GM12878 (cell line): ENCODE measurements at regions of chr3 and their contacts with region 1.

Region 1: DNA sequence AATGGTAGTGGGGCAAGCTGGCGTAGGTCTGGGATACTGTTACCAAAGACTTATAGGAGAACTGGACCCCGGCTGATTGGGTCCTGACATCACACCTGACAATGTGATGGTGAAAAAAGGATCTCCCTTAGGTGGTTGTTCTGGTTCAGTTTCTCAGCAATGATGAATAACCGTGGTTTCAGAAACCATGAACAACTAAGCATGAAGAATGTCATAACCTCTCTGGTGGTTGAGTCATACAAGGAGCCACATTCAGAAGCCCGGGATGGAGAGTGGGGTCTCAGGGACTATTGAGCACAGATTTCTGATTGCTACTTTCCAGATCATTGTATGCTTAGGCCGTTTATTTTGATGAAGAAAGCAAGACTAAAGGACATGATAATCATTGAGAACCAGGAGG is 17.4 kb downstream of the GPR160 start:
- DNase-seq: peak; percentile 63
- ATAC-seq: peak; percentile 73
- H3K4me3 ChIP-seq: peak overlapping the region; percentile 59
- H3K27ac ChIP-seq: peak overlapping the region; percentile 94
- H3K4me1 ChIP-seq: peaks cover 42% of the 10 kb centered on the region
- H3K27me3 ChIP-seq: no peaks in the 10 kb centered on the region
- CTCF ChIP-seq: 0 out of 6 replicates have a peak, but pooled peaks of 1 of the 3 experiments have one; percentile 2
- EP300 ChIP-seq: peak; percentile 35 to 36; a peak in 1 of 4 replicates
- POLR2A ChIP-seq: peak; percentile 24; the same call in 1 of the 2 replicates
- RAD21 ChIP-seq: no peak

Region 2: GRCh38 chr3:169846458-169847193 is 208.6 kb before region 1 on chr3:
- CTCF ChIA-PET with region 1: no interaction called
- POLR2A ChIA-PET with region 1: no interaction called
- RAD21 ChIA-PET with region 1: no interaction called
- SMC1A ChIA-PET with region 1: no interaction called
- in situ Hi-C with region 1: no loop called
- intact Hi-C with region 1: loop called (anchors 5 kb)
- DNase-seq: peak; percentile 46
- ATAC-seq: peak; percentile 95
- H3K4me3 ChIP-seq: peak overlapping the region; percentile 21; the same call in 1 of the 2 replicates
- H3K27ac ChIP-seq: peak overlapping the region; percentile 53
- H3K4me1 ChIP-seq: peaks cover 19% of the 10 kb centered on the region
- H3K27me3 ChIP-seq: peaks cover 0 to 4% of the 10 kb centered on the region in 2 experiments; a peak in 2 of 4 replicates
- CTCF ChIP-seq: no peak
- EP300 ChIP-seq: peak; percentile 26 to 47; a peak in 1 of 4 replicates
- POLR2A ChIP-seq: no peak
- RAD21 ChIP-seq: no peak

Region 3: GRCh38 chr3:169863458-169863899 is 191.7 kb before region 1 on chr3:
- CTCF ChIA-PET with region 1: interaction called, 65 read pairs
- POLR2A ChIA-PET with region 1: no interaction called
- RAD21 ChIA-PET with region 1: interaction called, 13 read pairs
- SMC1A ChIA-PET with region 1: interaction called, 30 read pairs
- in situ Hi-C with region 1: loop called (anchors 10 kb)
- intact Hi-C with region 1: loop called (anchors 1 kb)
- DNase-seq: peak; percentile 61
- ATAC-seq: peak; percentile 81
- H3K4me3 ChIP-seq: no peak overlapping the region
- H3K27ac ChIP-seq: no peak overlapping the region
- H3K4me1 ChIP-seq: peaks cover 16% of the 10 kb centered on the region
- H3K27me3 ChIP-seq: no peaks in the 10 kb centered on the region; a peak in 1 of 4 replicates
- CTCF ChIP-seq: peak; percentile 93 to 96 (median 93); a peak in 5 of 6 replicates
- EP300 ChIP-seq: no peak
- POLR2A ChIP-seq: no peak
- RAD21 ChIP-seq: peak; percentile 99

Region 4: DNA sequence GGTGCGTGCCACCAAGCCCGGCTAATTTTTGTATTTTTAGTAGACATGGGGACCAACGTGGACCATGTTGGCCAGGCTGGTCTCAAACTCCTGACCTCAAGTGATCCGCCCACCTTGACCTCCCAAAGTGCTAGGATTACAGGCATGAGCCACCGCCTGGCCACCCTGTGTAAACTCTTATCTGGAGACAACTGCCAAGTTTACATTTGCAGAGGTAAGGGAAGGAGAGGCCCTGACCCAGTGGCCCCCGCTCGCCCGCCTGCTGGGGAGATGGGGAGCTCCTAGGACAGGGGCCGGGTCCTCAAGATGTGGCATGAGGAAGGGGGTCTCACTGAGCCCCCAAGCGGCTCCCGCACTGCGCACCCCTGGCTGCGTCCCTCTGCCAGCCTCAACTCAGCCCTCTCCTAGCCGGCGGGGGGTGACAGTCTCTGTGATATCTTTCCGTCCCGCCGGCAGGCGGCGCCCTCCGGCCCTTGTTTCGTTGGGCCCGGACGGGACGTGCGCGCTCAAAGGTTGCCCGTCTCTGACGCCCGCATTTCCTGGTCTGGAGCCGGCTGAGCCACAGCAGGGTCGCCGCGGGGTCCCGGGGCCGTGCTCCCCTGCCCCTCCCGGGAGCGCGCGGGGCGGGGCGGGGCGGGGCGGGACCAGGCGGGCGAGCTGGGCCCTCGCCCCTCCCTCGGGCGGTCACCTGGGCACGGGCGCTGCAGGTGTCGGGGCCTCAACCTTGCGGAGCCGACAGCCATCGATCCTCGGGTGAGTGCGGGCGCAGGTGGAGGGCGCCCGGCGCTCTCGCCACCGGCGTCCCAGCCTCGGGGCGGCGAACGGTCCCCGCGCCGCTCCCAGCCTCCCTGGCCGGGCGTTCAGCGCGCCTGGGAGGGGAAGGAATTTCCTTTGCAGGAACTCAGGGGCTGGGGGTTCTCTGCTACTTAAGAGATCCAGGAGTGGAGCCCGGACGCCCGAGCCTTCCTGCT is 17.5 kb before region 1 on chr3 and contains the start of gene GPR160:
- CTCF ChIA-PET with region 1: interaction called, 21 read pairs
- POLR2A ChIA-PET with region 1: interaction called, 4 read pairs
- RAD21 ChIA-PET with region 1: interaction called, 5 read pairs
- SMC1A ChIA-PET with region 1: interaction called, 7 read pairs
- in situ Hi-C with region 1: no loop called
- intact Hi-C with region 1: no loop called
- DNase-seq: no peak
- ATAC-seq: peak; percentile 93
- H3K4me3 ChIP-seq: peak within 1 kb of the TSS; percentile 87
- H3K27ac ChIP-seq: peak within 1 kb of the TSS; percentile 88
- H3K4me1 ChIP-seq: peaks cover 11% of the 10 kb centered on the region; the same call in 1 of the 2 replicates
- H3K27me3 ChIP-seq: no peaks in the 10 kb centered on the region; a peak in 2 of 4 replicates
- CTCF ChIP-seq: peak; percentile 83 to 91 (median 84)
- EP300 ChIP-seq: no peak
- POLR2A ChIP-seq: peak; percentile 79
- RAD21 ChIP-seq: peak; percentile 81
- polyA plus RNA-seq, gene GPR160: 8.8 to 14.4 TPM

Region 5: DNA sequence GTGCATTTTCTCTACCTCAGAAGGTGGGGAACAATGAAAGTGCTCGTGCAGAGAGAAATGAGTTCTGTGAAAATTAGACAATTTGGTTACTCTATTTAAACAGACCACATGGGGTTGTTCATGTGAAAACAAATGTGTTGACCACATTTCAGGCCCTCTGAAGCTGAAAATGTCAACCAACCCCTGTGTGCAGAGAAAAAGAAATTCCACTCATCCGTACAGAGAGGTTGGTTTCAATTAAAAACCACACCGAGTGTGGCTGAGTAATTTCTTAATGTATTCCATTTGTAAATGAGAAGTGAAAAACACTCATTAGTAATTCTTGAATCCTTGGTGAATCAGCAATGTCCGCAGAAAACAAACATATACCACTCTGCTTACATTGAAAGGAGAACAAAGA is 577.6 kb after region 1 on chr3:
- CTCF ChIA-PET with region 1: no interaction called
- POLR2A ChIA-PET with region 1: no interaction called
- RAD21 ChIA-PET with region 1: no interaction called
- SMC1A ChIA-PET with region 1: no interaction called
- in situ Hi-C with region 1: loop called (anchors 10 kb)
- intact Hi-C with region 1: loop called (anchors 5 kb)
- DNase-seq: peak; percentile 95
- ATAC-seq: peak; percentile 97
- H3K4me3 ChIP-seq: no peak overlapping the region
- H3K27ac ChIP-seq: no peak overlapping the region
- H3K4me1 ChIP-seq: peaks cover 27% of the 10 kb centered on the region
- H3K27me3 ChIP-seq: peaks cover 0 to 5% of the 10 kb centered on the region in 2 experiments; a peak in 3 of 4 replicates
- CTCF ChIP-seq: no peak
- EP300 ChIP-seq: peak; percentile 37 to 44; a peak in 2 of 4 replicates
- POLR2A ChIP-seq: no peak
- RAD21 ChIP-seq: no peak